ENCODE measurements at regions of chr5 and their contacts with region 1.

Region 1: GRCh38 chr5:57137401-57137800 is 36.5 kb upstream of the GPBP1 start:
- DNase-seq: no peak
- H3K4me3 Mint-ChIP-seq: peak overlapping the region; percentile 65
- H3K27ac Mint-ChIP-seq: no peak overlapping the region
- H3K4me1 Mint-ChIP-seq: no peaks in the 10 kb centered on the region
- H3K27me3 Mint-ChIP-seq: no peaks in the 10 kb centered on the region
- CTCF ChIP-seq: no peak

Region 2: GRCh38 chr5:56951946-56952691 is 185.3 kb before region 1 on chr5 and contains the start of gene MIER3:
- CTCF ChIA-PET with region 1: interaction called, 16 read pairs
- intact Hi-C with region 1: loop called (anchors 2 kb)
- DNase-seq: peak; percentile 83
- H3K4me3 Mint-ChIP-seq: peak within 1 kb of the TSS; percentile 82
- H3K27ac Mint-ChIP-seq: peak within 1 kb of the TSS; percentile 28
- H3K4me1 Mint-ChIP-seq: peaks cover 22% of the 10 kb centered on the region
- H3K27me3 Mint-ChIP-seq: no peaks in the 10 kb centered on the region
- CTCF ChIP-seq: no peak
- total RNA-seq, gene MIER3: 24.1 and 26.3 TPM in 2 replicates

Region 3: DNA sequence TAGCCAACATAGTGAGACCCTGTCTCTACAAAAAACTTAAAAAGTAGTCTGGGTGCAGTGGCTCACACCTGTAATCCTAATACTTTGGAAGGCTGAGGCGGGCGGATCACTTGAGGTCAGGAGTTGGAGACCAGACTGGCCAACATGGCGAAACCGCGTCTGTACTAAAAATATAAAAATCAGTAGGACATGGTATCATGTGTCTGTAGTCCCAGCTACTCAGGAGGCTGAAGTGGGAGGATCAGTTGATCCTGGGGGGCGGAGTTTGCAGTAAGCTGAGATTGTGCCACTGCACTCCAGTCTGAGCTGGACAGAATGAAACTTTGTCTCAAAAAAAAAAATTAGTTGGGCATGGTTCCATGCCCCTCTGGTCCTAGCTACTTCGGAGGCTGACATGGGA is 127.6 kb before region 1 on chr5:
- CTCF ChIA-PET with region 1: no interaction called
- intact Hi-C with region 1: no loop called
- DNase-seq: no peak
- H3K4me3 Mint-ChIP-seq: no peak overlapping the region
- H3K27ac Mint-ChIP-seq: no peak overlapping the region
- H3K4me1 Mint-ChIP-seq: peaks cover 15% of the 10 kb centered on the region
- H3K27me3 Mint-ChIP-seq: no peaks in the 10 kb centered on the region
- CTCF ChIP-seq: no peak

Region 4: GRCh38 chr5:57221049-57221568 is 83.7 kb after region 1 on chr5:
- CTCF ChIA-PET with region 1: interaction called, 4 read pairs
- intact Hi-C with region 1: loop called (anchors 2 kb)
- DNase-seq: peak; percentile 63
- H3K4me3 Mint-ChIP-seq: no peak overlapping the region
- H3K27ac Mint-ChIP-seq: no peak overlapping the region
- H3K4me1 Mint-ChIP-seq: peaks cover 11% of the 10 kb centered on the region
- H3K27me3 Mint-ChIP-seq: no peaks in the 10 kb centered on the region
- CTCF ChIP-seq: peak; percentile 78

Measured in Calu3 (cell line).